ENCODE measurements at regions of chr10 and their contacts with region 1.

Region 1: GRCh38 chr10:116038259-116038658 is 234.7 kb downstream of the GFRA1 start:
- DNase-seq: peak in 1 of 5 donors; percentile 65
- H3K4me3 ChIP-seq: no peak overlapping the region
- H3K27ac ChIP-seq: no peak overlapping the region
- H3K4me1 ChIP-seq: no peaks in the 10 kb centered on the region
- H3K27me3 ChIP-seq: no peaks in the 10 kb centered on the region
- CTCF ChIP-seq: no peak
- EP300 ChIP-seq: no peak
- POLR2A ChIP-seq: no peak

Region 2: DNA sequence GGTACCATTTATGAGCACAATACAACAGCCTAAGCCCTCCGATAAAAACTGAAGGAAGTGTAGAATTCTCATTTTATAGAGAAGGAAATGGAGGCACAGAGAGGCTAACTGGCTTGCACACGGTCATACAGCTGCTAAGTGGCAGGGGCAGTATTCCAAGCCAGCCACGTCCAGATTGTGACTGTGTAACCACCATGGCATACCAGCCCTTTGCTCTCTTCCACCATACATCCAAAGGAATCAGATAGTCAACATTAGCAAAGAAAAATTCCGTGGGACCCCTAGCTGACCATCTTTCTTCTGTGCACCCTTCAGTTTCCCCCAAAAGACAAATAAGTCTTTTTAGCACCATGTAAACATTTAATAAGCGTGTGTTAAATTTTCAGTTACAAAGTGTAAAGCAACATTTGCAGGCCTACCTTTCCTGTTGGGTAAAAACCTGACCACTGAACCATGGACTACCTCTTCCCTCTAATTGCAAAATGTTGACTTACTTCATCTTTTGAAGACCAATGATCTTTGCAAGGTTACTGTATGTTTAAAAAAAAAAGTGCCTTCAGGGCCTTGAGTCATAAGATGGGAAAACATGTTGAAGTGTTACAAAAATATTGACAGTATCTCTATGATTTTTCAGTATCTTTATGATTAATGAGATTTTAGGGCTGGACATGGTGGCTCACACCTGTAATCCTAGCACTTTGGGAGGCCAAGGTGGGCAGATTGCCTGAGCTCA is 1361.2 kb after region 1 on chr10:
- intact Hi-C with region 1: loop called in 1 of 4 experiments (anchors 5 kb)
- DNase-seq: no peak
- H3K4me3 ChIP-seq: no peak overlapping the region
- H3K27ac ChIP-seq: no peak overlapping the region
- H3K4me1 ChIP-seq: no peaks in the 10 kb centered on the region
- H3K27me3 ChIP-seq: no peaks in the 10 kb centered on the region
- CTCF ChIP-seq: no peak
- EP300 ChIP-seq: no peak
- POLR2A ChIP-seq: no peak